ACHN (cell line): ENCODE measurements at regions of chr12 and their contacts with region 1.

Region 1: GRCh38 chr12:442235-442884 is 17.4 kb upstream of the B4GALNT3 start:
- DNase-seq: peak; percentile 62

Region 2: DNA sequence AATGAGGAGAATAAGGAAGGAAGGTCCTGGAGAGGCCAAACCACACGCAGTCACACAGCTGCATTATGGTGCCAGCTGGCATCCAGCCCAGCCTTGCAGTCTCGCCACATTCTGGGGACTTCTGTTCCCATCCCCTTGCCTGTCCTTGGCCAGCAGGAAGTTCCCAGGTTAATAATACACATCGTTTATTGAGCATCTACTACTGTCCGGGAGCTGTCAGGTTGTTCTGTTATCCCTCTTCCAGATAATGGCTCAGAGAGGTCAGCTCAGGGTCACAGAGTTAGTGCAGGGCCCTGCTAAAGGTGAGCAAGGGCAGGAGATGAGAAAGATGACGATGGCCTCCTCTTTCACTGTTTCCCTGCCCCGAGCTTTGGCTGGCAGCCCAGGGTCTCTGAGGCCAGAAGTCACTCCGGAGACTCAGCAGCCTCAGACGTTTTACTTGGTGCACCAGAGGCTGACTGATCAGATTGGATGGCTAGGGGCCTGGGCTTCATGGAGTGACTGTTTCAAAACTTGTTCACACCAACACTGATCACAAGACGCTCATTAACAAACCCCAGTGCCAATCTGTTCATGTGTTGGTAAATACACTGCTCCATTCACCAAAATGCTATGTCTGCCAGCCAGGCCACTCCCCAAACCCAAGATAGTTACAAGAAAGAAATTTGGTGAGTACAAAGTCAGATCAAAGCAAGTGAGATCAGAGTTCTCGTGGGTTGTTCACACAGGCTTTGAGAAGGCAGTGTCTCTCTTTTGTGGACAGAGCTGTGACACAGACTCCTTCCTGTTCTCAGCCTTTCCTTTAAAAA is 96.6 kb after region 1 on chr12:
- in situ Hi-C with region 1: loop called (anchors 10 kb)
- DNase-seq: peak; percentile 42

Region 3: DNA sequence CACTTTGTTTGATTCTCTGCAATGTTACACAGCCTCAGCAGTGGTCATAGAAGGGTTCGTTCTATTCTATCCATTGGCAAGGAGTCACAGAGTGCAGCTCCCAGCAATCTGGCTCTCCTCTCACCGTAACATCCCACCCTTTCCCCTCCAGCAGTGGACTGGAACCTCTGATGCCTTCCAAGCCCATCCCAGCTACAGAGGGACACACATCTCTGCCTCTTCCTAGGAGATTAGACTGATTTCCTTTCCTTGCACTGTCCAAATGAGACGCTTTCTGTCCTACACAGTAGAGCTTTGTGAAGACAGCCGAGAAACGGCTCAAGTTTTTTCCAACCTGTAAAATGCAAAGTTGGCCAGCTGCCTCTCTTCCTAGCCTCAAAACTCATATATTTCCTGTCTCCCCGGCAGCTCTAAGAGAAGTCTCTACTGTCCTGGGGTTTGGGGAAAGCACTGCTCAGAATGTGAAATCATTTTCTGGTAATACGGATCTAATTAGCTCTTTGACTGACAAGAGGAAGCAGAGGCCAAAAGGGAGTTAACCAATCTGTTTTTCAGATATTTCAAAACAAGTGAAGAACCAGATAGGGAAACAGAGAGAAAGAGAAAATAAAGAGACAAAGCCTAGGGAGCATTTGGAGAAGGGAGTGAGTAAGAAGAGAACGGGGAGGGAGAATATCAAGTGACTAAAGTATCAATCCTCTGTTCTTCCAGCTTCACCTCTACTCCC is 220.4 kb after region 1 on chr12:
- in situ Hi-C with region 1: no loop called
- DNase-seq: no peak

Region 4: GRCh38 chr12:1003600-1004271 is 561.4 kb after region 1 on chr12:
- in situ Hi-C with region 1: no loop called
- DNase-seq: no peak